ENCODE measurements at regions of chr19 and their contacts with region 1.

Region 1: GRCh38 chr19:49196527-49197240 is 39.1 kb downstream of the TRPM4 start:
- DNase-seq: peak; percentile 70
- ATAC-seq: peak; percentile 82

Region 2: DNA sequence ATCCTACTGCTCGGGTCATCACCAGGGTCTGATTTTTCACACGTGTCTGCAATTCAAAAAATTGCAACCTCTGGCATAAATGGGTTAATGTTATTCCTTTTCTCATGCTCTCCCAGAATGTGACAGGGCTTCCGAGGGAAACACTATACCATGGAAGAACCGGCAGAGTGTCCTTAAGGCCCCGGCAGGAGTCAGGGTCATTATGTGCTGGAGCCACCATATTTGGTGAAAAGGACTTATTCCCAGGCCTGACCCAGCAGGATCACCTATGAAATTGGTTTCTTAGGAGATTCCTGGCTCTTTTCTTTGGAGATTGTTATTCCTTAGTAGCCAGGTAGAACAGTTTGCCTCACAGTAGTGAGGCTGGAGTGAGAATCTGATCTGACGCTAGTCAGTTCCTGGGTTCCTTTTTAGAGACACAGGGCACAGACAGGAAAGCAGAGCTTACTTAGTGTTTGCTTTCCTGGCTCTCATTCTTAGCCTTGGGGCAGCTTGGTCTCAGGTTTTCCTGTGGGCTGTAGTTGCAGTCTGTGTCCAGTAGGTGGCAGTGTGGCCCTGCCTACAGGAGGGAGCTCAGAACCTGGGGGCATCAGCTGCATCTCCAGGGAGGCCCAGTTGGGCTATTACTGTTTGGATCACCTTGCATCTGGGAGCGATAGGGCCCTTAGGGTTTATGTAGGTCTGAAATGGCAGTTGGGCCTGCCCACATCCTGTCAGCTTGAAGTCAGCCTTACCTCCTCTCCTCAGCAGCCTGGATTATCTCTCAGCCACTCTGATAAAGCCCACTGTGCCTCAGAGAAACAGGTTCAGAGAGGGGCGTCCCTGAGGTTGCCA is 99.0 kb before region 1 on chr19:
- intact Hi-C with region 1: loop called (anchors 5 kb)
- DNase-seq: no peak
- ATAC-seq: peak; percentile 65

Measured in Right ventricle myocardium inferior (tissue), 1 donor.